ENCODE measurements at regions of chr10 and their contacts with region 1.

Region 1: GRCh38 chr10:17816199-17816598 is 7.1 kb downstream of the MRC1 start:
- DNase-seq: no peak
- ATAC-seq: no peak
- H3K4me3 ChIP-seq: no peak overlapping the region
- H3K27ac ChIP-seq: no peak overlapping the region
- H3K4me1 ChIP-seq: no peaks in the 10 kb centered on the region
- H3K27me3 ChIP-seq: no peaks in the 10 kb centered on the region
- CTCF ChIP-seq: no peak
- POLR2A ChIP-seq: no peak
- RAD21 ChIP-seq: no peak

Region 2: GRCh38 chr10:17878896-17879295 is 62.7 kb after region 1 on chr10:
- CTCF ChIA-PET with region 1: no interaction called
- POLR2A ChIA-PET with region 1: no interaction called
- RAD21 ChIA-PET with region 1: no interaction called
- intact Hi-C with region 1: loop called (anchors 5 kb)
- DNase-seq: no peak
- ATAC-seq: no peak
- H3K4me3 ChIP-seq: no peak overlapping the region
- H3K27ac ChIP-seq: no peak overlapping the region
- H3K4me1 ChIP-seq: no peaks in the 10 kb centered on the region
- H3K27me3 ChIP-seq: no peaks in the 10 kb centered on the region
- CTCF ChIP-seq: no peak
- POLR2A ChIP-seq: no peak
- RAD21 ChIP-seq: no peak